Common myeloid progenitor, CD34-positive (primary cell): ENCODE measurements at regions of chr10 and their contacts with region 1.

Region 1: DNA sequence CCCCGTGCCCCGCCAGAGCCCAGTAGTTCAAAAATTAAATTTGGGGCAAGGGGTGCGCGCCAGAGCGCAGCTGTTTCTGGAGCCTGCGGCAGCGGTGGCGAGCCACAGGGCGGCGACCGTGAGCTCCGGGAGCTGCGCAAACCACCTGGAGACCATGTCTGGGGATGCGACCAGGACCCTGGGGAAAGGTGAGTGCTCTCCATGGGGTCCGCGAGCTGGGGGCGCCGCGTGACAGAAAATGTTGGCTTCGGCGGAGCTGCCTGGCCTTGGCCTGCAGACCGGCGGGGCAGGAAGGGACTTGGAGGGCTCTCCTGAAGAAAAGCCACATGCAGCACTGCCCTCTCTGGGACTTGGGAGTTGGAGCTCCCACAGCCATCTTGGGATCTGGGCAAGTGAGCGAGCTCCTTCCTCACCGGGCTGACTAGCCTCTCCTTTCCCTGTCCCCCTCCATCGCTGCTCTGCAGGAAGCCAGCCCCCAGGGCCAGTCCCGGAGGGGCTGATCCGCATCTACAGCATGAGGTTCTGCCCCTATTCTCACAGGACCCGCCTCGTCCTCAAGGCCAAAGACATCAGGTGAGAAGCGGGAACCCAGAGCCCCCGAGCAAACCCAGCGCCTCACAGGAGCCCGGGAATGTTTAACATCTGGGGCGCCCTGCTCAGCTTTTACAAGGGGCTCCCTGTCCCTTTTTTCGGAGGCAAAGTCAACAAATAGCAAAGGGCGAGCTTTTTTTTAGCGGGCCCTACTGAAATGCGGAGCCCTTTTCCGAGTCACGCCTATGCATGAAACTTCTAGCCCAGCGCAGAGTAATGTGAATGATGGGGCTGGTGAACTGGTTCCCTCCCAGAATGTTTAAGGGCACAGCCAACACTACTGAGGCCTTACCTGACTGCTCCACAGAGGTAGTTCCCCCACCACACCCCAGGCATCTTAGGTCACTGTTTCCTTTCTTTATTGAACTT is 6.1 kb downstream of the GSTO2 start:
- DNase-seq: peak; percentile 51 to 65 (median 58)
- H3K4me3 ChIP-seq: peak overlapping the region in 6 of 7 experiments; percentile 35 to 75 (median 50)
- H3K27ac ChIP-seq: no peak overlapping the region
- H3K4me1 ChIP-seq: peaks cover 0 to 20% (median 9%) of the 10 kb centered on the region in 4 experiments
- H3K27me3 ChIP-seq: no peaks in the 10 kb centered on the region

Region 2: DNA sequence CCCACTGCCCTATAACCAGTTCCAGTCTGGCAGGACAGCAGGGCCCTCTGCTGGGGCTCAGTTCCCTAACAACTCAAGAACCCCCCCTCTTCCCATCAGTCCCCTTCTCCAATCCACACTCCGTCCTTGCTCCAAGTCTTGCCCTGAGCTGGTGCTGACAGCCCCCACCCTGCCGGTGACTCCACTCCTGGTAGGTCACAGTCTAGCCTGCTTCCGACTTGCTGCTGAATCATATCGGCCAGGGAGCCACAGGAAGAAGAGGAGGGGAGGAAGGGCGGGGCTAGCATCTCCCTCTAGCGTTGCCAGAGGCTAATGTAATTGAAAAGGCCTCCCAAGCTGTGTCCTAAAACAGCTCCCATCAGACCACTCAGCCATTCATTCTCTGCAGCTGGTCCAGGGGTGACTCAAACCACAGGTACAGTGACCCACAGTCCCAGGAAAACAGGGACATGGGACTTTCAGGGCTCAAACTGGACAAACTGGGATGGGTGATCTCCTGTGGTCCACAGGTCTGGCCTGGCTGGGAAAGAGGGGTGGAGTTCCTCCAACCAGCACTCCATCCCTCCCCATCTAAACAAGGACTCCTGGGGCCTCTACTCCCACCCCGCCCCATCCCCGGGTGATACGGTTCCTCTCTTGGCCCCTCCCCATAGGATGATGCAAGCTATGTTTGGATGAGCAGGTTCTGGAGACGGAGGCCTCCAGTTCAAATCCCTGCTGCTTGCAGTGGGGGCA is 578.5 kb before region 1 on chr10:
- CTCF ChIA-PET with region 1: no interaction called
- POLR2A ChIA-PET with region 1: no interaction called
- DNase-seq: peak; percentile 43 to 74 (median 69)
- H3K4me3 ChIP-seq: no peak overlapping the region
- H3K27ac ChIP-seq: no peak overlapping the region
- H3K4me1 ChIP-seq: peaks cover 0 to 31% (median 28%) of the 10 kb centered on the region in 4 experiments
- H3K27me3 ChIP-seq: peaks cover 0 to 33% (median 12%) of the 10 kb centered on the region in 5 experiments

Region 3: GRCh38 chr10:104231784-104232612 is 43.0 kb before region 1 on chr10 and contains the start of gene CFAP43:
- CTCF ChIA-PET with region 1: interaction called, 14 read pairs
- POLR2A ChIA-PET with region 1: no interaction called
- DNase-seq: peak; percentile 96 to 98 (median 98)
- H3K4me3 ChIP-seq: peak within 1 kb of the TSS; percentile 75 to 94 (median 86)
- H3K27ac ChIP-seq: peak within 1 kb of the TSS; percentile 54 to 84
- H3K4me1 ChIP-seq: peaks cover 0 to 13% (median 8%) of the 10 kb centered on the region in 4 experiments
- H3K27me3 ChIP-seq: no peaks in the 10 kb centered on the region

Region 4: GRCh38 chr10:104254493-104255310 is 20.3 kb before region 1 on chr10 and contains the start of gene GSTO1:
- CTCF ChIA-PET with region 1: interaction called, 37 read pairs
- POLR2A ChIA-PET with region 1: interaction called, 13 read pairs
- DNase-seq: peak; percentile 48 to 64 (median 64)
- H3K4me3 ChIP-seq: peak within 1 kb of the TSS; percentile 78 to 93 (median 91)
- H3K27ac ChIP-seq: peak within 1 kb of the TSS; percentile 69 to 86
- H3K4me1 ChIP-seq: peaks cover 12 to 52% (median 27%) of the 10 kb centered on the region in 4 experiments
- H3K27me3 ChIP-seq: no peaks in the 10 kb centered on the region

Region 5: GRCh38 chr10:104291439-104291951 is 16.5 kb after region 1 on chr10:
- CTCF ChIA-PET with region 1: interaction called, 207 read pairs
- POLR2A ChIA-PET with region 1: interaction called, 3 read pairs
- DNase-seq: peak; percentile 84 to 93 (median 91)
- H3K4me3 ChIP-seq: peak overlapping the region in 1 of 7 experiments; percentile 55
- H3K27ac ChIP-seq: no peak overlapping the region
- H3K4me1 ChIP-seq: peaks cover 0 to 17% (median 8%) of the 10 kb centered on the region in 4 experiments
- H3K27me3 ChIP-seq: no peaks in the 10 kb centered on the region

Region 6: DNA sequence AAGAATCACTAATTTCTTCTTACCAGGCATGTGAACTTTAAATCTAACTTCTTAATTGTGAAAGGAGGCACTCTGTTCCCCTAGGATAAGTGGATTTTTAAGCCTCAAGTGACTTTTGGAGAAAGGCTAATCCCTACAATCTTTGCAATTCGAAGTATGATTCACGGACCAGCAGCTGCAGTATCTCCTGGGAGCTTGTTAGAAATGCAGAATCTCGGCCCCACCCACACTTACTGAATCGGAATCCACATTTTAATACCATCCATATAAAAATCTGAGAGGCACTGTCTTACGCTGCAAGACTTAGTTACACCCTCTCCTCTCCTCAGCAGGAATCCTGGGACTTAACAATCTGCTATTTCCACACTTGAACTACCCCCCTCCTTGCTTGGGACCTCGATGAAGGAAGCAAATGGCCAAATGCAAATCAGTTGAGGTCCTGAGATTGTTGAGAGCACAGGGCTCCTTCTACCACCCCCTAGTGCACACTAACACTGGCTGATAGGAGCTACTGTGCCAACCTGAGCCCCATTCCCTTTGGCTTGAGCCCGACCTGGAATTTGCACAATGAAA is 42.2 kb after region 1 on chr10:
- CTCF ChIA-PET with region 1: interaction called, 12 read pairs
- POLR2A ChIA-PET with region 1: no interaction called
- DNase-seq: no peak
- H3K4me3 ChIP-seq: no peak overlapping the region
- H3K27ac ChIP-seq: no peak overlapping the region
- H3K4me1 ChIP-seq: peaks cover 7 to 47% (median 37%) of the 10 kb centered on the region in 4 experiments
- H3K27me3 ChIP-seq: no peaks in the 10 kb centered on the region

Region 7: GRCh38 chr10:104353325-104354048 is 78.4 kb after region 1 on chr10 and contains the start of gene CFAP58:
- CTCF ChIA-PET with region 1: interaction called, 92 read pairs
- POLR2A ChIA-PET with region 1: no interaction called
- DNase-seq: peak; percentile 89 to 92 (median 90)
- H3K4me3 ChIP-seq: peak within 1 kb of the TSS; percentile 24 to 84 (median 66)
- H3K27ac ChIP-seq: no peak within 1 kb of the TSS
- H3K4me1 ChIP-seq: peaks cover 32 to 48% (median 42%) of the 10 kb centered on the region in 4 experiments
- H3K27me3 ChIP-seq: peaks cover 0 to 7% (median 0%) of the 10 kb centered on the region in 5 experiments